Dendritic cell treated with granulocyte-macrophage colony-stimulating factor and Interleukin-4, amounts not matched to agents 40 ng/mL and 50 ng/mL, for 4 days (primary cell): ENCODE measurements at regions of chr11 and their contacts with region 1.

Region 1: GRCh38 chr11:124961972-124962609 is 8.1 kb downstream of the CCDC15 start:
- H3K4me3 Mint-ChIP-seq: no peak overlapping the region
- H3K27ac Mint-ChIP-seq: no peak overlapping the region
- H3K4me1 Mint-ChIP-seq: peaks cover 8% of the 10 kb centered on the region
- H3K27me3 Mint-ChIP-seq: no peaks in the 10 kb centered on the region

Region 2: GRCh38 chr11:125224391-125225010 is 262.4 kb after region 1 on chr11:
- intact Hi-C with region 1: loop called (anchors 5 kb)
- H3K4me3 Mint-ChIP-seq: no peak overlapping the region
- H3K27ac Mint-ChIP-seq: no peak overlapping the region
- H3K4me1 Mint-ChIP-seq: no peaks in the 10 kb centered on the region
- H3K27me3 Mint-ChIP-seq: peaks cover 4% of the 10 kb centered on the region

Region 3: GRCh38 chr11:125345421-125346178 is 383.5 kb after region 1 on chr11:
- intact Hi-C with region 1: loop called (anchors 2 kb)
- H3K4me3 Mint-ChIP-seq: no peak overlapping the region
- H3K27ac Mint-ChIP-seq: no peak overlapping the region
- H3K4me1 Mint-ChIP-seq: peaks cover 6% of the 10 kb centered on the region
- H3K27me3 Mint-ChIP-seq: peaks cover 24% of the 10 kb centered on the region

Region 4: DNA sequence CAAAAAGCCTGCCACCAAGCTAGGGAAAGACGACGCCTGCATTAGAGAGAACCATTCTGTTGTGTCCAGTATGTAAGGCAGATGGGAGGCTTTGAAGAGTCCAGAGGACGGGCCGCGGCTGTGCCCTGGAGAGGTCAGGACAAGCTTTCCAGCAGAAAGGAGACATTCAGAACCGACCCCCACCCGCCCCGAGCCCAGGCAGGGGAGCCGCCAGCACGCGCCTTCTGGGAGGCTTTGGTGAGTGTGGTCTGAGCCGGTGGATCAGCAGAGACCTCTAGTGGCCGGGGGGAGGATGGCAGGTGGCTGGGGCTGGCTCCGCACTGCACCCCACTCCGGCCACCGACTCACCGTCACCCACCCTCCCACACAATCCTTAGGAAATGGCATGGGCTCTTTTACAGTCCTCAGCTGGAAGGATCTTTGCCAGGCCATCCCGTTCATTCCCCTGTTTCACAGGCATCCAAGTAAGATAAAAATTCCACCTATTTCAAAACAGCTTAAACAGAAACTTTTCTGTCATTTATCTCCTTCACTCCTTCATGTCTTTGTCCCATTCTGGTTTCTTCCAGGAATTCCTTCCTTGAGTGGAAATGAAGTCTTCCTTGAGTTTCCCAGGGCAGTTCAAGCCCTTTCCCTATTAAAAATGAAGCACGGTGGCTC is 442.8 kb after region 1 on chr11:
- intact Hi-C with region 1: loop called (anchors 2 kb)
- H3K4me3 Mint-ChIP-seq: no peak overlapping the region
- H3K27ac Mint-ChIP-seq: no peak overlapping the region
- H3K4me1 Mint-ChIP-seq: peaks cover 7% of the 10 kb centered on the region
- H3K27me3 Mint-ChIP-seq: peaks cover 53% of the 10 kb centered on the region